Spleen (tissue), 13 donors: ENCODE measurements at regions of chr17 and their contacts with region 1.

Region 1: DNA sequence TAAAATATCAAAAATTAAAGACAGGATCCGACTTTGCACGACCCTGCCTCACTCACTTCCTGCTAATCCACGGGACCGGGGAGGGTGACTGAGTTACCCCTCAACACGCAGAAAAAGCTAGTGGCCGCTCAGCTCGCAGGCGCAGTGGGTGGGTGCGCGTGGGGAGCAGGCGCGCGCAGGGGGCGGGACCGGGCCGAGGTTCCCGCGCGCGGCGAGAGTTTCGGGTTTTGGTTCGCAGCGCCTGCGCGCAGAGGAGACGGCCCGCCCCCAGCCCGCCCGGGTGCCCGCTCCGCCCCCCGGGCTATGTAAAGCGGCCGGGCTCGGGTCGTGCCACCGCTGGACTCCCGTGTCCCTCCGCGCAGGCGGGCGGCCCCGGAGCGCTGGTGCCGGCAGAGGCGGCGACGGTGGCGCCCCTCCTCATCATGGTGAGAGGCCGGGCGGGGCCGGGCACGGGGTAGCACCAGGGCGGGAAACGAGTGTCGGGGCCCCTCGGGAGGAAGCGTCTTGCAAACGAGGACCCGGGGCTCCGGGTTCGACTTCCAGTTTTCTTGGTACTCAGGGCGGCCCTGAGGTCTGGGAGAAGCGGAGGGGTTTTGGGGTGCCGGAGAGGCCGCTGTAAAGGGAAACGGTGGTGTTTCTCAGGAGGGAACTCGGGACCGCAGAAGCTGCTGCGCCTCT is at the start of gene CNP:
- DNase-seq: peak; percentile 96
- H3K4me3 ChIP-seq: peak within 1 kb of the TSS; percentile 75 to 95 (median 88)
- H3K27ac ChIP-seq: peak within 1 kb of the TSS; percentile 81 to 93 (median 90)
- H3K4me1 ChIP-seq: peaks cover 13 to 69% (median 54%) of the 10 kb centered on the region in 6 donors
- H3K27me3 ChIP-seq: no peaks in the 10 kb centered on the region
- CTCF ChIP-seq: peak in 4 of 11 experiments; percentile 6 to 49 (median 36)
- POLR2A ChIP-seq: peak in 2 of 3 donors; percentile 27 to 59
- total RNA-seq, gene CNP: 29.2 to 49.8 (median 44.2) TPM

Region 2: GRCh38 chr17:42019509-42020404 is 53.2 kb after region 1 on chr17 and contains the start of gene NKIRAS2:
- intact Hi-C with region 1: loop called (anchors 10 kb)
- DNase-seq: peak; percentile 100
- H3K4me3 ChIP-seq: peak within 1 kb of the TSS; percentile 72 to 88 (median 79)
- H3K27ac ChIP-seq: peak within 1 kb of the TSS; percentile 76 to 95 (median 87)
- H3K4me1 ChIP-seq: peaks cover 32 to 91% (median 72%) of the 10 kb centered on the region in 6 donors
- H3K27me3 ChIP-seq: no peaks in the 10 kb centered on the region
- CTCF ChIP-seq: peak; percentile 87 to 99 (median 97)
- POLR2A ChIP-seq: no peak
- total RNA-seq, gene NKIRAS2: 20.7 to 38.8 (median 25.2) TPM